Activated CD4-positive, alpha-beta memory T cell treated with anti-CD3 and anti-CD28 coated beads, Interleukin-2, amount 10 ng/mL, durations not matched to agents 7 days and 5 days (primary cell): ENCODE measurements at regions of chr9 and their contacts with region 1.

Region 1: DNA sequence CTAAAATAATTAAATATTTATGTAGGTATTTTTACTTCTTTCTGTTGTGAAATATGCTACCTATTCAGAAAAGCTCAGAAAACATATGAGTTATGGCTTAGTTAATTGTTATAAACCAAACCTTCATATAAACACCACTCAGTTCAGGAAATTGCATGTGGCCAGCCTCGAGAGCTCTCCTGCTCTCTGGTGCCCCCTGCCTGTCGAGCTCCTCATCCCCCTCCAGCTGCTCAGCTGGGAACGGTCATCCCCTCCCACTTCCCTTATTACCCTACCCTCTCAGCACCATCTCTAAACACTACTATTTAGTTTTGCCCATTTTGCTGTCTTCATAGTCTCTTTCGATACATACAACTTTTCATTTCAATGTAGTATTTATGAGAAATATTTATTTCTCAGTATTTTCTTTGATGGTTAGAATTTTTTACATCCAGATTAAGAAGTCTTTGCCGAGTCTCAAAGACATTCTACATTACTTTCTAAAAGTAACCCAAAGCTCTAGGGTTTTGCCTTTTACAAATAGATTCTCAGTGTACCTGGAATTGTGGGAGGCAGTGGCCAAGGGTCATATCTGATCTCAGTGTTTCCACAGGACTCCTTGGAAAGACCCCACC is 51.2 kb upstream of the SEMA4D start:
- DNase-seq: peak; percentile 85
- H3K4me3 Mint-ChIP-seq: no peak overlapping the region
- H3K27ac Mint-ChIP-seq: no peak overlapping the region
- H3K4me1 Mint-ChIP-seq: peaks cover 21% of the 10 kb centered on the region
- H3K27me3 Mint-ChIP-seq: peaks cover 24% of the 10 kb centered on the region

Region 2: GRCh38 chr9:89410641-89411350 is 138.3 kb before region 1 on chr9:
- CTCF ChIA-PET with region 1: interaction called, 23 read pairs
- POLR2A ChIA-PET with region 1: interaction called, 13 read pairs
- DNase-seq: peak; percentile 56
- H3K4me3 Mint-ChIP-seq: peak overlapping the region; percentile 58
- H3K27ac Mint-ChIP-seq: peak overlapping the region; percentile 93
- H3K4me1 Mint-ChIP-seq: peaks cover 99% of the 10 kb centered on the region
- H3K27me3 Mint-ChIP-seq: no peaks in the 10 kb centered on the region

Region 3: GRCh38 chr9:89437000-89437631 is 112.0 kb before region 1 on chr9:
- CTCF ChIA-PET with region 1: interaction called, 16 read pairs
- POLR2A ChIA-PET with region 1: interaction called, 3 read pairs
- DNase-seq: peak; percentile 60
- H3K4me3 Mint-ChIP-seq: no peak overlapping the region
- H3K27ac Mint-ChIP-seq: peak overlapping the region; percentile 74
- H3K4me1 Mint-ChIP-seq: peaks cover 83% of the 10 kb centered on the region
- H3K27me3 Mint-ChIP-seq: no peaks in the 10 kb centered on the region

Region 4: DNA sequence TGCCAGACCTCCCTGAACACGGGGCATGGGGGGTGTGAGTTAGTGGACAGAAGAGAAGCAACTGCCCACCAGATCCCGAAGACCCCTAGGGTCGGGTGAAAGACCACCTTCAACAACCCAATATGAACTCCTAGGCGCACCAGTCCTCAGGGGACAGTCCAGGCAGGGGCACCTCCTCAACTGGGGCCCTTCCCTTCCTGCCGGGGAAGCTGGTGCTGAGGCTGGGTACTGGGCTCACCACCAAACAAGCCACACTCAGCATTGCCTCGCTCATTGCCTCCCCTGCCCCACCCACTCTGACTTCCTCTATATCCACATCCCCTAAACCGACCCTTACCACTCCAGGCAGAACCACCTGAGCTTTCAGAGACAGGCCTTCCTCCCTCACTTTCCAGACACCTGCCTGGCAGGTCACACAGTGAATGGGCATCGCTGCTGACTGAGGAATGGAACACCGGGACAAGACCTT is 93.7 kb before region 1 on chr9:
- CTCF ChIA-PET with region 1: interaction called, 27 read pairs
- POLR2A ChIA-PET with region 1: interaction called, 15 read pairs
- DNase-seq: peak; percentile 62
- H3K4me3 Mint-ChIP-seq: peak overlapping the region; percentile 52
- H3K27ac Mint-ChIP-seq: peak overlapping the region; percentile 76
- H3K4me1 Mint-ChIP-seq: peaks cover 90% of the 10 kb centered on the region
- H3K27me3 Mint-ChIP-seq: no peaks in the 10 kb centered on the region

Region 5: GRCh38 chr9:89483592-89484522 is 65.3 kb before region 1 on chr9:
- CTCF ChIA-PET with region 1: interaction called, 60 read pairs
- POLR2A ChIA-PET with region 1: interaction called, 10 read pairs
- DNase-seq: peak; percentile 67
- H3K4me3 Mint-ChIP-seq: peak overlapping the region; percentile 80
- H3K27ac Mint-ChIP-seq: peak overlapping the region; percentile 89
- H3K4me1 Mint-ChIP-seq: peaks cover 90% of the 10 kb centered on the region
- H3K27me3 Mint-ChIP-seq: no peaks in the 10 kb centered on the region

Region 6: GRCh38 chr9:89505911-89506310 is 43.2 kb before region 1 on chr9:
- CTCF ChIA-PET with region 1: interaction called, 33 read pairs
- POLR2A ChIA-PET with region 1: interaction called, 16 read pairs
- DNase-seq: no peak
- H3K4me3 Mint-ChIP-seq: no peak overlapping the region
- H3K27ac Mint-ChIP-seq: no peak overlapping the region
- H3K4me1 Mint-ChIP-seq: peaks cover 76% of the 10 kb centered on the region
- H3K27me3 Mint-ChIP-seq: no peaks in the 10 kb centered on the region

Region 7: DNA sequence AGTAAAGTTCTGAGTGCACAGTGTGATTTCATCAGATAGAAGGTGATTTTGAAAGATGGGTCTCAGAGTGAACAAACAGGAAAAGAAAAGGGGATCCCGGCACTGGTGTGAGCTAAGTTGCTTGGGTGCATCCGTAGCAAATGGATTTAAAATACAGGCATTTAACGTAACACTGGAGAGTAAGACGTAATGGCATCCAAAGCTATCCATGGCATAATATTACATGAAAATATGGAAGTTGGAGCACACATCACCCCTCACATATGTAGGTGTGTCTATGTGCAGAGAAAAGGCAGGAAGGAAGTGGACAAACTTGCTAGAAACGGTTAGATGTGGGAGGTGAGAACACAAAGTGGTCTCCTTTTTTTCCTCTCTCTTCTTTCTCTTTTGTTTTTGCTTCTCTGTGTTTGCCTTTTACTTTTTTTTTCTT is 13.0 kb before region 1 on chr9:
- CTCF ChIA-PET with region 1: interaction called, 33 read pairs
- POLR2A ChIA-PET with region 1: interaction called, 16 read pairs
- DNase-seq: peak; percentile 24
- H3K4me3 Mint-ChIP-seq: peak overlapping the region; percentile 53
- H3K27ac Mint-ChIP-seq: peak overlapping the region; percentile 90
- H3K4me1 Mint-ChIP-seq: peaks cover 81% of the 10 kb centered on the region
- H3K27me3 Mint-ChIP-seq: no peaks in the 10 kb centered on the region